HepG2 (cell line): ENCODE measurements at regions of chr10 and their contacts with region 1.

Region 1: DNA sequence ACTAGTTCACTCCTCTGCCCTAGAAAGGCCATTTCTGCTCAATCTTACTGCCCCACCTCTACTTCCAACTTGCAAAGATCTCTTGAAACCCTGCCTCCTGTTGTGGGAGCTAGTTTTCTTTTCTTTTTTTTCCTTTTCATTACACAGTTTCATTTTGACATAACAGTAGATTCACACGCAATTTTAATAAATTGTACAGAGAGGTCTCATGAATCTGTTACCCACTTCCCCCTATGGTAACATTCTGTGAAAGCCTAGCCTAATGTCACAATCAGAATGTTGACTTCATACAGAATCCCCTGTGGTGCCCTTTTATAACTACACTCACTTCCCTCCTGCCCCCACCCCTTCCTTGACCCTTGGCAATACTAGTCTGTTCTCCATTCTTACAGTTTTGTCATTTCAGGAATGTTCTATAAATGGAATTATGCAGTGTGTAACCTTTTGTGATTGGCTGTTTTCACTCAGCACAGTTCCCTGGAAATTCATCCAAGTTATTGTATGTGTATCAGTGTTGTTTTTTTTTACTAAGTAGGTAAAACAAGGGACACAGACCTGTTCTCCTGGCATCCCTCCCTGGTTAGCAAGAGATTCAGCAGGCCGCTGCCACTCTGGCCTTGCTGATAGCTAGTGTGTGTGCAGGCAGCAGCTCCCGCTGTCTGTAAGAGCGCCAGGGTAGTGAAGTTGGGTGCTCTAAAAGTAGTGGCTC is 21.5 kb downstream of the CHST3 start:
- DNase-seq: no peak
- ATAC-seq: no peak
- H3K4me3 ChIP-seq: peak overlapping the region in 1 of 3 experiments; percentile 41; a peak in 1 of 6 replicates
- H3K27ac ChIP-seq: peak overlapping the region; percentile 88
- H3K4me1 ChIP-seq: peaks cover 86% of the 10 kb centered on the region
- H3K27me3 ChIP-seq: no peaks in the 10 kb centered on the region
- CTCF ChIP-seq: no peak
- EP300 ChIP-seq: no peak
- POLR2A ChIP-seq: no peak
- RAD21 ChIP-seq: no peak

Region 2: DNA sequence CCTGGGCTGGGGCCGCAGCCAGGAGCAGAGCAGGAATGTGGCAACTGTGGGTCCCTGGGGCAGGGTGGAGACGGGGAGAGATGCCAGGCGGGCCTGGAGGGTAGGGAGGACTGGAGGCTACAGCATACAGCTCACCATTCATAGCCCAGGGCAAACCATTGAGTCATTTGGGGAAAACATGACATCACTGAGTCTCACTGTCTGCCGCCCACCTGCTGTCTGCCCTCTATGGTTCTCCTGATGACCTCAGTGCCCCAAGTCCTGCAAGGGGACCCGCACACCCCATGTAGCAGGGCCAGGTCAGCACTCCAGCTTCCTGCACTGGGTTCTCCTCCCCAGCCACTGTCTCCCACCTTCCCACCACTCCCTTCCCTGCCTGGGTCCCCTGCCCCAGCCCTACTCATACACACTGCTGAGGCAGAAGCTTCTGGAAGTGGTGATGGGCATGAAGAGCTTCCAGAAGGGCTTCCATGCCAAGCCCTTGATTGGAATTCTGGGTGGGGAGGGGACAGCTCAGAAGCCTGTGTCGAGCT is 11.1 kb before region 1 on chr10:
- CTCF ChIA-PET with region 1: no interaction called
- POLR2A ChIA-PET with region 1: interaction called, 39 read pairs
- in situ Hi-C with region 1: no loop called
- intact Hi-C with region 1: no loop called
- DNase-seq: no peak
- ATAC-seq: no peak
- H3K4me3 ChIP-seq: no peak overlapping the region
- H3K27ac ChIP-seq: peak overlapping the region; percentile 91
- H3K4me1 ChIP-seq: peaks cover 71% of the 10 kb centered on the region
- H3K27me3 ChIP-seq: no peaks in the 10 kb centered on the region
- CTCF ChIP-seq: no peak
- EP300 ChIP-seq: no peak
- POLR2A ChIP-seq: no peak
- RAD21 ChIP-seq: no peak